ENCODE measurements at regions of chr1 and their contacts with region 1.

Region 1: DNA sequence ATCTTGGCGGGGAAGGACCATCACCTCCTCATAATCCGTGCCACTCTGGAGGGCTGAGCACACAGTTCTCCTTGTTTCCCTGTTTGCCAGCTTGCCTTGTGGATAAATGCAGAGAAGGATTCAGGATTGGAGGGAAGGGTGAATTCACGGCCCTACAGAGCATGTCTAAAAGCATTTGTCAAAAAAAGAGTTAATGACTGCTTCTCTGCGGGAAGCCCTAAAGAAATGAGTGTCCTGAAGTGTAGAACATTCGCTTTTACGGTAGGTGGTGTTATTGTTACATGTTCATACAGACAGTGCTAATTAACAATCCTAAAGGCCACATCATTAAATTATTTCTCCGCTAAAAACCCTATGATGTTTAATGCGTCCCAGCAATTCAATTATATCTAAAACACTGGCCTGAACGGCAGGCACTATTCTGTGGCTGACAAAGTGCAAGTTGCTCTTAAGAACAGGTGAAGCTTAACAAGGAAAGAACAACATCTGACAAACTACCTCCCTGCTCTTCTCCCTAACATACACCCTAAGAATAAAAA is 112.3 kb upstream of the NFIA start:
- DNase-seq: no peak
- ATAC-seq: peak; percentile 48 to 78 (median 60)
- H3K4me3 ChIP-seq: peak overlapping the region in 4 of 12 donors; percentile 2 to 25 (median 10)
- H3K27ac ChIP-seq: peak overlapping the region in 8 of 12 donors; percentile 31 to 79 (median 62)
- H3K4me1 ChIP-seq: peaks cover 0 to 15% (median 2%) of the 10 kb centered on the region in 12 donors
- H3K27me3 ChIP-seq: no peaks in the 10 kb centered on the region
- CTCF ChIP-seq: peak in 11 of 12 donors; percentile 32 to 69 (median 56)
- POLR2A ChIP-seq: no peak

Region 2: DNA sequence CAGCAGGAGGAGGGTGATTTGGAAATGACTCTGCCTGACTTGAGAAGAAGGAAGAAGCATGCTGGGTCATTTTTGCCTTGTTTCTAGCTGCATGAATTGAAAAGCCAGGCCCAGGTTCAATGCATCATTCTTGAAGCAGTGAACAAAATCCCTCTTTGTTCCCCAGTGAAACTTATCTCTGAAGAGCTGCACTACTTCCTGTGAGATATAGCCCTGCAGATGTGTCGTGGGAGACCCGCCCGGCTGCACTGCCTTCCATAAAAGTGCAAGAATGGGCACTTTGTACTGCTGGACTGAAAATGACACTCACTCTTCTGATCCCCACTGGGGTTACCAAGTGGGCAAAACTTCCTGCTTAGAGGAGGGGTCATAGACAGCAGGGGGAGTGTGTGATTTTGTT is 136.9 kb before region 1 on chr1:
- intact Hi-C with region 1: no loop called
- DNase-seq: peak in 3 of 5 donors; percentile 10 to 23 (median 18)
- ATAC-seq: peak in 3 of 4 donors; percentile 49 to 72 (median 51)
- H3K4me3 ChIP-seq: no peak overlapping the region
- H3K27ac ChIP-seq: peak overlapping the region in 5 of 12 donors; percentile 23 to 59 (median 47)
- H3K4me1 ChIP-seq: peaks cover 0 to 5% (median 0%) of the 10 kb centered on the region in 12 donors
- H3K27me3 ChIP-seq: peaks cover 0 to 3% (median 0%) of the 10 kb centered on the region in 9 donors
- CTCF ChIP-seq: no peak
- POLR2A ChIP-seq: no peak

Region 3: GRCh38 chr1:60848583-60849188 is 121.4 kb before region 1 on chr1:
- intact Hi-C with region 1: loop called in 1 of 10 experiments (anchors 5 kb)
- DNase-seq: no peak
- ATAC-seq: no peak
- H3K4me3 ChIP-seq: no peak overlapping the region
- H3K27ac ChIP-seq: no peak overlapping the region
- H3K4me1 ChIP-seq: peaks cover 0 to under 1% (median 0%) of the 10 kb centered on the region in 12 donors
- H3K27me3 ChIP-seq: no peaks in the 10 kb centered on the region
- CTCF ChIP-seq: peak; percentile 29 to 62 (median 52)
- POLR2A ChIP-seq: no peak

Region 4: DNA sequence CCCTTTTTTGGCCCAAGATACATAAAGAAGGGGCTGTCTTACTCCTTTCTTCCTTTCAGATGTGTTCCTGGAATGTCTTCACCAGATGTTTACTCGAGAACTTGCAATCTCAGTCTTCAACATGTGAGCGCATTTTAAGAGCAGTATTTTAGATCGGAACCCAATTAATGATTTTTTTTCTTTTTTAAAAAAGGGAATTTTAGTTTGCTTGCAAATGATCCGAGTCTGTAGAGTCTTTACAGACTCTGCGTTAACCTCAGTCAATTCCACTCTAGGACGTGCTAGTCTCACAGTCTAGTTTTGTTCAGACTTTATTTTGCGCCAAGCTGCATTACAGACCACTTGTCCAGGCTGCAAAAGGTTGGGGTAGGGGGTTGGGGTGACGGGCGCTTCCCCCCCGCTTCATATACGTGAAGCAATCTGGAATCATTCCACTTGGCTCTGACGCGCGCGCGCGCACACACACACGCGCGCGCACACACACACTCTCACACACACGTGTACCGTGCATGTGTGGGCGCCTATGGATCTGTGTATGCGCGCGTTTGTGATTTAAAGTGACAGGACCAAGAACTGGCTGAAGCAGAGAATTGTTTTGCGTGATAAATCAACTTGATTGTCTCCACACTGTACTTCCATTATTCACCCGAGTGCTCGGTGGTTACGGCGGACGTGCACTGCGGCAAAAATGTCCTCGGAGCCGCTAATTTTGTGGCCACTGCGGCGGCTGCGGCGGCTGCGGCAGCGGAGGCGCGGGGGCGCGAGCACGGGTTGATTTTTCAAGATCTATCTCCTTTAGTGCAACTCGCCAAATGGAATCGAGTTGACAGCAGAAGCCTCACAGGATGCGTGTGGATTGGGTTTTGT is 86.8 kb after region 1 on chr1:
- intact Hi-C with region 1: no loop called
- DNase-seq: peak; percentile 55 to 78 (median 61)
- ATAC-seq: peak; percentile 30 to 69 (median 61)
- H3K4me3 ChIP-seq: peak overlapping the region; percentile 38 to 92 (median 72)
- H3K27ac ChIP-seq: peak overlapping the region; percentile 68 to 99 (median 92)
- H3K4me1 ChIP-seq: peaks cover 0 to 57% (median 34%) of the 10 kb centered on the region in 12 donors
- H3K27me3 ChIP-seq: peaks cover 0 to 5% (median 0%) of the 10 kb centered on the region in 9 donors
- CTCF ChIP-seq: no peak
- POLR2A ChIP-seq: no peak

Region 5: GRCh38 chr1:61641578-61642336 is 671.7 kb after region 1 on chr1:
- intact Hi-C with region 1: loop called in 4 of 10 experiments (anchors 5 to 10 kb)
- DNase-seq: peak; percentile 76 to 88 (median 78)
- ATAC-seq: peak; percentile 71 to 90 (median 86)
- H3K4me3 ChIP-seq: peak overlapping the region in 8 of 12 donors; percentile 3 to 50 (median 41)
- H3K27ac ChIP-seq: peak overlapping the region in 11 of 12 donors; percentile 45 to 88 (median 77)
- H3K4me1 ChIP-seq: peaks cover 0 to 41% (median 10%) of the 10 kb centered on the region in 12 donors
- H3K27me3 ChIP-seq: no peaks in the 10 kb centered on the region
- CTCF ChIP-seq: peak; percentile 62 to 89 (median 76)
- POLR2A ChIP-seq: no peak

Measured in heart left ventricle (tissue), 16 donors.